CD14-positive monocyte (primary cell): ENCODE measurements at regions of chr15 and their contacts with region 1.

Region 1: GRCh38 chr15:85534031-85534430 is 153.6 kb downstream of the AKAP13 start:
- DNase-seq: peak; percentile 65 to 71 (median 68)
- H3K4me3 ChIP-seq: peak overlapping the region in 1 of 3 experiments; percentile 58
- H3K4me3 Mint-ChIP-seq: peak overlapping the region; percentile 25 to 81
- H3K27ac ChIP-seq: peak overlapping the region; percentile 76 to 87
- H3K27ac Mint-ChIP-seq: peak overlapping the region; percentile 91 to 99 (median 98)
- H3K4me1 ChIP-seq: peaks cover 63 to 76% of the 10 kb centered on the region in 2 donors
- H3K4me1 Mint-ChIP-seq: peaks cover 67% of the 10 kb centered on the region
- H3K27me3 ChIP-seq: no peaks in the 10 kb centered on the region
- H3K27me3 Mint-ChIP-seq: peaks cover 0 to 2% (median 0%) of the 10 kb centered on the region in 3 donors
- CTCF ChIP-seq: no peak

Region 2: GRCh38 chr15:85482894-85483293 is 51.1 kb before region 1 on chr15:
- intact Hi-C with region 1: no loop called
- DNase-seq: peak; percentile 36 to 47 (median 41)
- H3K4me3 ChIP-seq: no peak overlapping the region
- H3K4me3 Mint-ChIP-seq: peak overlapping the region; percentile 18 to 55
- H3K27ac ChIP-seq: peak overlapping the region in 1 of 2 donors; percentile 34
- H3K27ac Mint-ChIP-seq: peak overlapping the region in 5 of 7 donors; percentile 20 to 79 (median 75)
- H3K4me1 ChIP-seq: peaks cover 9 to 15% of the 10 kb centered on the region in 2 donors
- H3K4me1 Mint-ChIP-seq: peaks cover 35% of the 10 kb centered on the region
- H3K27me3 ChIP-seq: no peaks in the 10 kb centered on the region
- H3K27me3 Mint-ChIP-seq: peaks cover 0 to 3% (median 0%) of the 10 kb centered on the region in 3 donors
- CTCF ChIP-seq: no peak

Region 3: DNA sequence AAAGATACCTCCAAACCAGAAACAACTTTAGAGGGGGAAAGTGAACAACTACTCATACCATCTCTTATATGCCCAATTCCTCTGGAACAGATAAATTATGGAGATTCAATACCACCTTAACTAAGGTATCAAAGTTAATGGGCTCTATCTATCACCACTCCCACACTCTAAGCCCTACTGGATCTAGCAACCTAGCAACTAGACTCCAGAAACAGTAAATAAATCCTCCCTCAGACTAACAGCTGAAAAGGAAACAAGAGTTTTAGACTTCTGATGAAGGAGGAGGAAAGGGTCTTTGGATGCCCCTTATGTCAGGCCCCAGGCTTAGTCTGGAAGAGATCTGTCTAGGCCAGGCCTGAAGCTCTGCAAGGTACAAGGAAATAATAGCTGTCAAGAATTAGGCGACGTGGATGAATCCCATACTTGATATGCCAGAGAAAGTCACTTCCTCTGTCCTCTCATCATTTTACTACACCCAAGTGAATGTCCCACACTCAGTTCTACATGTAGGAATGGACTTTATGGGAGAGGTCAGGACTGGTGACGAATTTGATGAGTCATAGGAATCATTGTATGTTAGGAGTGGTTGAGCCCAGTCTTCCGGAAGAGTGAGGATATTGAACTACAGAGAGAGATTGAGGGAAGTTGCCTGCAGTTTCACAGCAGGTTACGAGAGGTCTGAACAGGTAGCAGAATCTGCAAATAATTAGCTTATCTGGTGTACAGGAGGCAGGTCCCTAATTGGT is 39.8 kb before region 1 on chr15:
- intact Hi-C with region 1: loop called in 1 of 2 experiments (anchors 5 kb)
- DNase-seq: peak; percentile 12 to 54 (median 50)
- H3K4me3 ChIP-seq: no peak overlapping the region
- H3K4me3 Mint-ChIP-seq: no peak overlapping the region
- H3K27ac ChIP-seq: no peak overlapping the region
- H3K27ac Mint-ChIP-seq: peak overlapping the region in 3 of 7 donors; percentile 17 to 66 (median 21)
- H3K4me1 ChIP-seq: peaks cover 32% of the 10 kb centered on the region in 2 donors
- H3K4me1 Mint-ChIP-seq: peaks cover 49% of the 10 kb centered on the region
- H3K27me3 ChIP-seq: no peaks in the 10 kb centered on the region
- H3K27me3 Mint-ChIP-seq: peaks cover 0 to 6% (median 1%) of the 10 kb centered on the region in 3 donors
- CTCF ChIP-seq: no peak

Region 4: GRCh38 chr15:85673326-85673725 is 139.3 kb after region 1 on chr15:
- intact Hi-C with region 1: no loop called
- DNase-seq: no peak
- H3K4me3 ChIP-seq: no peak overlapping the region
- H3K4me3 Mint-ChIP-seq: no peak overlapping the region
- H3K27ac ChIP-seq: peak overlapping the region in 1 of 2 donors; percentile 58
- H3K27ac Mint-ChIP-seq: peak overlapping the region in 3 of 7 donors; percentile 9 to 80 (median 50)
- H3K4me1 ChIP-seq: no peaks in the 10 kb centered on the region
- H3K4me1 Mint-ChIP-seq: peaks cover 1% of the 10 kb centered on the region
- H3K27me3 ChIP-seq: no peaks in the 10 kb centered on the region
- H3K27me3 Mint-ChIP-seq: no peaks in the 10 kb centered on the region
- CTCF ChIP-seq: no peak